Activated naive CD4-positive, alpha-beta T cell treated with anti-CD3 and anti-CD28 coated beads for 36 hours (primary cell): ENCODE measurements at regions of chr7 and their contacts with region 1.

Region 1: GRCh38 chr7:154927624-154928143 is 75.2 kb downstream of the PAXIP1 start:
- DNase-seq: peak; percentile 91
- H3K4me3 Mint-ChIP-seq: peak overlapping the region; percentile 95
- H3K27ac Mint-ChIP-seq: peak overlapping the region; percentile 96
- H3K4me1 Mint-ChIP-seq: peaks cover 28% of the 10 kb centered on the region
- H3K27me3 Mint-ChIP-seq: no peaks in the 10 kb centered on the region

Region 2: DNA sequence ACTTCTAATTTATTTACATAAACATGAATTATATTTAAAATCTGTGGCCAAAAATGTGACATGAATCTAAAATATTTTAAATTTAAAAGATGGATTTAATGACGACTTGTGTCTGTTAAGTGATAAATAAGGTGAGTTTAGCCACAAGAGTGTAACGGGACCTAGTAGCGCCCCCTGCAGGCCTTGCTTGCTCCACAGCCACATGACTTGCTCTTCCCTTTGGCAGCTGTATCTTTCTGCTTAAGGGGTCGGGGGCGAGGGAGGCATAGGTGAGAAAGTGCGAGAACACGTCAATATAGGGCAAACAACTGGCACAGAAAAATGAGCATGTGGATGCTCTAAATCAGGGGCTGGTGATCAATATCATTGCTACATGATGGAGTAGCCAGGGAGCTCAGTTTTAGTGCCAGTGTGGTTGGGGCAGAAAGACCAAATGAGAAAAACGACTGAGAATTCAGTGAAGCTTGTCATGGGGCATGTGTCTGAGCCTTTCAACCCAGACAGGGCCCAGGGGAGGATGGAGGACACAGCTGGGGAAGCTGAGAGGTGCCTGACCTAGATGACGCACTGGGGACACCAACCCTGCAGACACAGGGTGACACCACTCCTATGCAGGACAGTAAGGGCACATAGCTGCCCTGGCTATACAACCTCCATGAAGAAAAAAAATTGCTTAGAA is 25.5 kb after region 1 on chr7:
- CTCF ChIA-PET with region 1: interaction called, 54 read pairs
- intact Hi-C with region 1: loop called (anchors 1 kb)
- DNase-seq: peak; percentile 80
- H3K4me3 Mint-ChIP-seq: no peak overlapping the region
- H3K27ac Mint-ChIP-seq: no peak overlapping the region
- H3K4me1 Mint-ChIP-seq: no peaks in the 10 kb centered on the region
- H3K27me3 Mint-ChIP-seq: no peaks in the 10 kb centered on the region

Region 3: GRCh38 chr7:155069992-155070751 is 142.5 kb after region 1 on chr7 and contains the start of gene HTR5A:
- CTCF ChIA-PET with region 1: interaction called, 3 read pairs
- intact Hi-C with region 1: loop called (anchors 1 kb)
- DNase-seq: peak; percentile 92
- H3K4me3 Mint-ChIP-seq: no peak within 1 kb of the TSS
- H3K27ac Mint-ChIP-seq: no peak within 1 kb of the TSS
- H3K4me1 Mint-ChIP-seq: peaks cover 2% of the 10 kb centered on the region
- H3K27me3 Mint-ChIP-seq: peaks cover 52% of the 10 kb centered on the region
- total RNA-seq, gene HTR5A: not detected

Region 4: DNA sequence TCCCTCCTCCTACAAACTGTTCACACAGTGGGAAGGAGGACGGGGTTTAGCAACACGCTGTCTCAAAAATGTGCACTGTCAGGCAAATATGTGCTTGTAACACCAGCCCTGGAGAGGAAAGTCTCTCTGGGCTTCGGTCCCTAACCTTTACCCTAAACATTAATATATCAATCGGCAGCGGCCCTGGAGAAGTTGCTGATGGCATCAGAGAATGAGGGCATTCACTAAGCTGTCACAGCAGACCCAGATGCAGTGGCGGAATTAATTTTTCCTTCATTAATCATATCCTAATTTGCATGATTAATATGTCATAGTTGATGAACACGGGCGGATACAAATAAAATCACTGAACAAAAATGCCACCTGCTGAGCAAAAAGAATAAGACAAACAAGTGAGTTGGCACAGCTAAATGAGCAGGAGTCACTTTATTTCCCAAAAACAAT is 324.8 kb after region 1 on chr7:
- CTCF ChIA-PET with region 1: interaction called, 3 read pairs
- intact Hi-C with region 1: loop called (anchors 5 kb)
- DNase-seq: no peak
- H3K4me3 Mint-ChIP-seq: no peak overlapping the region
- H3K27ac Mint-ChIP-seq: no peak overlapping the region
- H3K4me1 Mint-ChIP-seq: peaks cover 5% of the 10 kb centered on the region
- H3K27me3 Mint-ChIP-seq: peaks cover 1% of the 10 kb centered on the region

Region 5: DNA sequence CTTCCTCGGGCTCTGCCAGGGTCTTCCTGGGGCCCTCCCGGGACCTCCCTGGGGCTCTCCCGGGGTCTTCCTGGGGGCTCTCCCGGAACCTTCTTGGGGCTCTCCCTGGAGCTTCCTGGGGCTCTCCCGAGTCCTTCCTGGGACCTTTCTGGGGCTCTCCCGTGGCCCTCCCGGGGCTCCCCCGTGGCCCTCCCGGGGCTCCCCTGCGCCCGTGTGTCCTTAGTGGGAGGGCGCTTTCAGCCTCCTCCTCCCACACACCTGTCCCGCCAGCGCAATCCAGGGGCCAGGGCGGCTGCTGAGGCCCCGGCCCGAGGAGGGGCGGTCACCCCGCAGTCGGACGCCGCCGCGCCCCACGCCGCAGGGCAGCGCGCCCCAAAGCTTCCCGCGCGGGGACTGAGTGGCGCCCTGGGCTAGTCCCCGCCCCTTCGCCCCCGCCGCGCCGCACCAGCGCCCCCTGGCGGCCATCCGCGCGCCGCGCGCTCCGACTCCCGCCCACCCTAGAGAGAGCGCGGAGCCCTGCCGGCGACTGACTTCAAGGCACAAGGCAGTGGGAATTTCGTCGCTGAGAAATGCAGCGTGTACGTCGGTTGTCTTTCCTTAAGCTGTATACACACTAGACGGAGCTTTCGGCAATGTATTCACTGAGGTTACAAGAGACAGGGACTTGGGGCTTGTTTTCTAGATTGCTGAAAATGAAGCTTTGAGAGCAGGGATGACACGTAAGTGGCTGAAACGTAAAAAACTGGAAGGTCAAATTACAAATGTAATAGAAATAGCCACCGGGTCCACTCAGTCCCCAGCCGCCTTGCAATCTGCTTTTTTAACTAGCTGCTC is 417.1 kb after region 1 on chr7:
- CTCF ChIA-PET with region 1: interaction called, 16 read pairs
- intact Hi-C with region 1: loop called (anchors 1 kb)
- DNase-seq: peak; percentile 87
- H3K4me3 Mint-ChIP-seq: peak overlapping the region; percentile 53
- H3K27ac Mint-ChIP-seq: no peak overlapping the region
- H3K4me1 Mint-ChIP-seq: peaks cover 13% of the 10 kb centered on the region
- H3K27me3 Mint-ChIP-seq: peaks cover 12% of the 10 kb centered on the region

Region 6: DNA sequence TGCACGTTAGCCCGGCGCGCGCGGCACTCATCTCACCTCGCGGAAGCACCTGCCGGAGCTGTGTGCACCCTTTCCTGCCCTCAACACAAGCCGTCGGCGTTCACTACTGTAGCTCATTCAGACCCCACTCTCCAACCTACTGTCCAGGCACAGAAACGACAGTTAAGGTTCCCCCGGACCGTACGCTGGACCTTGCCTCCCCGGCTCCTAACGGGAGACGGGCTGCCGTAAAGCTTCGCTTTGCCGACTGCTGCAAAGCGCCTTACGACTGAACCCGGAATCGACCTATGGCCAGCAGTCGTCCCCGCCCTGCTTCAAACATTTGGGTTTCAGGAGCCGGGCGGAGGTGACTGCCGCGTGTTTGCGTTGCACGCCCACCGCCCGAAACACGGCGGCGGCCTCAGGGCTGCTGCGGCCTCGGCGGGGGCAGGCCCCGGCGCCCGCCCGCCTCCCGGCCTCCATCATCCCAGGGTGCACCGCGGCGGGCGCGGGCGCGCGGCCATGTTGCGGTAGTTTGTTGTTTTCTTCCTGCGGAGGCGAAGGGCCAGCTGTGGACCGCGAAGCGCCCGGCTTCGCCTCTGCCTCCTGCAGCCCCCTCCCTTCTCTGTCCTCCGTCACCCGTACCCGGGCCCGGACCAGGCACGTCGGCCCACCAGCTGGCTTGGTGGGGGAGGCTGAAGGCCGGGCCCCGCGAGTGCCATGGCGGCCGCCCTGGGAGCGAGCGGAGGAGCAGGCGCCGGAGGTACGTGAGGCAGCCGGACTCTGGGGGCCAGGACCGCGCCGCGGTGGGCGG is 716.7 kb after region 1 on chr7 and contains the start of gene RBM33:
- CTCF ChIA-PET with region 1: interaction called, 3 read pairs
- intact Hi-C with region 1: loop called (anchors 2 kb)
- DNase-seq: peak; percentile 78
- H3K4me3 Mint-ChIP-seq: peak within 1 kb of the TSS; percentile 87
- H3K27ac Mint-ChIP-seq: peak within 1 kb of the TSS; percentile 95
- H3K4me1 Mint-ChIP-seq: peaks cover 41% of the 10 kb centered on the region
- H3K27me3 Mint-ChIP-seq: no peaks in the 10 kb centered on the region
- total RNA-seq, gene RBM33: 65.5 to 66.3 TPM